Sciatic nerve (tissue), 2 donors: ENCODE measurements at regions of chr5 and their contacts with region 1.

Region 1: DNA sequence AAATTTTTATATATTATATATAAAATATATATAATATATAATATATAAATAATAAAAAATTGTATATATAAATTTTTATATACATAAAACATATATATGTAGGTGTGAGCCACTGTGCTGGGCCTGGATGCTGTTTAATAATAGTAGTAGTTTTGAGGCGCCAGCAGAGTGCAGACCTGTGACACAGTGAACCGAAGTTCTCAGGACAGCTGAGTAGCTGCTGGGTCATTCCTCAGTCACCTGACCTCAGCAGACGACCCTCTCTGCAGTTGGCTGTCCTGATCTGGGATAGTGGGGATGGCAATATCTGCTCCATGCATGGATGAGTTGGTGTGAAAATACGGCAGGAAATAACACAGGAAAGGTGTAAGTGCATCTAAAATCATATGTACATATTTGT is 3.3 kb upstream of the SNX18 start:
- DNase-seq: no peak
- ATAC-seq: no peak

Region 2: GRCh38 chr5:54360089-54360488 is 154.2 kb before region 1 on chr5:
- intact Hi-C with region 1: no loop called
- DNase-seq: no peak
- ATAC-seq: no peak

Region 3: GRCh38 chr5:54807421-54807820 is 293.1 kb after region 1 on chr5:
- intact Hi-C with region 1: no loop called
- DNase-seq: no peak
- ATAC-seq: no peak

Region 4: GRCh38 chr5:54844905-54845566 is 330.7 kb after region 1 on chr5:
- intact Hi-C with region 1: loop called (anchors 2 kb)
- DNase-seq: no peak
- ATAC-seq: peak; percentile 71

Region 5: GRCh38 chr5:55134053-55134722 is 619.9 kb after region 1 on chr5:
- intact Hi-C with region 1: loop called (anchors 10 kb)
- DNase-seq: no peak
- ATAC-seq: no peak